Endothelial cell of umbilical vein (primary cell): ENCODE measurements at regions of chr2 and their contacts with region 1.

Region 1: DNA sequence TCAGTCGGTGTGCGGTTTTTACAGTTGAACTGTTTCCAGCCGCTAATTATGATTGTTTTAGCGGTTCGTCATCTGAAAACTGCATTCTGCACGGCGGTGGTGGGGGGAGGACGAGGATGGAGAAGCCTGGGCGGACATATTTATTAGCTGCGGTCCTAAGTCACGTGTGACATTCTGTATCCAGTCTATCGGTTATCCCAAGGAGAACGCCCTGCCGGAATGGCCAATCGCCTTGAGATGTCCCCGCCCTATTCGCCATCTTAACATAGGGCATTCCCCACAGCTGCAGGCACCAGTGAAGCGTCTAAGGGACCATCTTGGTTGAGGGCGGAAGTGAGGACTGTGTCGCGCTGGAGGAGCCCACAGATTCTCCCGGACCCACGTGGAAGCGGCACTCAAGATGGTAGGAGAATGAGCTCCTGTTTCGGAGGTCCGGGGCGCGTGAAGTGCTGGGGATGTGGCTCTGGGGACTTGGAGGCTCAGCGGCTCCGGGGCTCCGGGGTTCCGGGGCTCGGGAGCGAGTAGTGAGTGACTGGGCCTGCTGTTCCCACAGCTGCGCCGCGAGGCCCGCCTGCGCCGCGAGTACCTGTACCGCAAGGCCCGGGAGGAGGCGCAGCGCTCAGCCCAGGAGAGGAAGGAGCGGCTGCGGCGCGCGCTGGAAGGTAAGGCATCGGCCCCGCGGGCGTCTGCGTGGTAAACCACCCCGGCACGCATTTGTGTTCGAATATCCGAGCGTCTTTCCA is at the start of gene IMP4:
- DNase-seq: peak; percentile 99
- H3K4me3 ChIP-seq: peak within 1 kb of the TSS; percentile 52 to 92 (median 83)
- H3K27ac ChIP-seq: peak within 1 kb of the TSS; percentile 81
- H3K4me1 ChIP-seq: peaks cover 8% of the 10 kb centered on the region
- H3K27me3 ChIP-seq: no peaks in the 10 kb centered on the region
- CTCF ChIP-seq: peak; percentile 12 to 47
- POLR2A ChIP-seq: peak; percentile 61
- total RNA-seq, gene IMP4: 63.1 and 74.0 TPM in 2 replicates

Region 2: DNA sequence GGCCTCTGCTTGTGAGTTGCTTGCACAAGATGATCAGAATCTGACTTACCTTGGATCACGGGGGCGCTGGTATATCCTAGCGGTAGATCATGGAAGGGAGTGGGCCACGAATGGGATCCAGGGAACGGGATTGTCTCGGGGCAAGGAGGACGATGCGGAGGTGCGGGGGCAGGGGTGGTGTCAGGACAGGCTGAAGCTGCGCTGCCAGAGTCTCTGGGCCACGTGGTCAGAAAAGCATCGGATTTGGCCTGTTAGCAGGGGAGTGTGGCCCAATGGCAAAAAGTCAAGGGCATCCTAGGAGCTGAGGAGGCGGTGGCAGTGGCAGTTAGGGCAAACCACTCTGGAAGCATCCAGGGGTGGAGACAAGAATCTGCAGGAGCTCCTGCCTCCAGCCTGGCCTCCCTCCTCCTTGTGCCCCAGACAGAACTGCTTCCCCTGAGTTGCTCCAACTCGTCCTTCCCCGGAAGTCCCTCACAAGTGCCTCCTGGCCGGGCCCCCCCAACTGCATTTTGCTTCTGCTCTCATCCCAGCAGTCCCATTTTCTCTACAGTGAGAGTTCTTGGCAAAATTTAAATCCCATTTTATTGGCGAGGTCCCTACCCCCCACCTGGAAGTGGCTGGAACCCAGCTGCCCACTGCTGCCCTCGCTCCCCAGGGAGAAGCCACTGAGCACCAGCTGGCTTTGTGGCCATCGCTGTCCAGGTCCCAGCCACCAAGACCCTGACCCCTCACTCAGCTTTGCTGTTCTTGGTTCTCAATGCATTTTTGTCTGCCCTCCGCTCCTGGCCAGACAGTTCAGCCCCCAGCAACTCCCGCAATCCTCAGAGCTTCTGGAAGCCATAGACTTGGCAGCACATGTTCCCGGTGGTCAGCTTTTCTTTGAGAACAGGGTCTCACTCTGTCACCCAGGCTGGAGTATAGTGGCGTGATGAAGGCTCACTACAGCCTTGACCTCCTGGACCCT is 192.2 kb before region 1 on chr2:
- CTCF ChIA-PET with region 1: no interaction called
- POLR2A ChIA-PET with region 1: no interaction called
- dilution Hi-C with region 1: no loop called
- intact Hi-C with region 1: no loop called
- DNase-seq: no peak
- H3K4me3 ChIP-seq: no peak overlapping the region
- H3K27ac ChIP-seq: no peak overlapping the region
- H3K4me1 ChIP-seq: no peaks in the 10 kb centered on the region
- H3K27me3 ChIP-seq: no peaks in the 10 kb centered on the region
- CTCF ChIP-seq: no peak
- POLR2A ChIP-seq: no peak

Region 3: GRCh38 chr2:130181325-130181879 is 161.3 kb before region 1 on chr2 and contains the start of gene SMPD4:
- CTCF ChIA-PET with region 1: interaction called, 14 read pairs
- POLR2A ChIA-PET with region 1: interaction called, 4 read pairs
- dilution Hi-C with region 1: no loop called
- intact Hi-C with region 1: loop called (anchors 1 kb)
- DNase-seq: peak; percentile 96
- H3K4me3 ChIP-seq: peak within 1 kb of the TSS; percentile 76 to 96 (median 88)
- H3K27ac ChIP-seq: peak within 1 kb of the TSS; percentile 78
- H3K4me1 ChIP-seq: peaks cover 11% of the 10 kb centered on the region
- H3K27me3 ChIP-seq: no peaks in the 10 kb centered on the region
- CTCF ChIP-seq: no peak
- POLR2A ChIP-seq: peak; percentile 53
- total RNA-seq, gene SMPD4: 88.1 and 91.4 TPM in 2 replicates

Region 4: DNA sequence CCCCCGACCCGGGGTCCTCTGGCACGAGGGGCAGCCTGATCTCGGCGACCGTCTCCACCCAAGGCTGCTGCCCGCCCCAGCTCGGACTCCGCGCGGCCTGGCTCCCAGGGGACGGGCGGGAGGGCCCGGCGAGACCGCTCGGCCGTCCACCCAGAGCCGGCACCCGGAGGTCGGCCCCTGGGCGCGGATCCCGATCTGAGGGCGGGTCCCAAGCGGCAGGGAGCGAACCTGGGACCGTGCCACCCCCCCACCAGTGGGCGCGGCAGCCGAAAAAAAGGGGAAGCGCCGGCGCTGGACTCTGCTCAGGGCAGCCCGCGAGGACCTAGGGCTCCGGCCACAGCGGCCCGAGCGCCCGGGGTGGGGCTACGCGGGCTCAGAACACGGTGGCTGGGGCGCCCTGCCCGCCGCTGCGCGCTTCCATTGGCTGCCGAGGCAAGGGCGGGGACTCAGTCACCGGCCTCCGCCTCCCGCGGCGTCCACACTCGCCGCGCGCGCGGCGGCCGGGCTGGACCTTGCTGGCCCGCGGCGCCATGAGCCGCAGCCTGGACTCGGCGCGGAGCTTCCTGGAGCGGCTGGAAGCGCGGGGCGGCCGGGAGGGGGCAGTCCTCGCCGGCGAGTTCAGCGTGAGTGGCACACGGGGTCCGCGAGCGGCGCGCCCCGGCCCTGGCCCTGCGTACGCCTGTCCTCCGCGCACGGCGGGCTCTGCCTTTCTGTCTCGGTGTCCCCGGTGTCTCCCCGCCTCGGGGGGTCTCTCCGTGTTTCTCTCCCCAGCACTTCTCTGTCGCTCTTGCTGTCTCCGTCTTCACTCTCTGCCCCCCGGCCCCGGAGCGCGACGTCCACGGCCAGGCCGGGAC is 13.1 kb after region 1 on chr2 and contains the start of gene PTPN18:
- CTCF ChIA-PET with region 1: interaction called, 37 read pairs
- POLR2A ChIA-PET with region 1: interaction called, 17 read pairs
- dilution Hi-C with region 1: no loop called
- intact Hi-C with region 1: loop called (anchors 1 kb)
- DNase-seq: peak; percentile 89
- H3K4me3 ChIP-seq: peak within 1 kb of the TSS; percentile 46 to 81 (median 53)
- H3K27ac ChIP-seq: no peak within 1 kb of the TSS
- H3K4me1 ChIP-seq: peaks cover 4% of the 10 kb centered on the region
- H3K27me3 ChIP-seq: no peaks in the 10 kb centered on the region
- CTCF ChIP-seq: peak; percentile 64 to 69
- POLR2A ChIP-seq: peak; percentile 75
- total RNA-seq, gene PTPN18: 31.5 and 39.6 TPM in 2 replicates

Region 5: DNA sequence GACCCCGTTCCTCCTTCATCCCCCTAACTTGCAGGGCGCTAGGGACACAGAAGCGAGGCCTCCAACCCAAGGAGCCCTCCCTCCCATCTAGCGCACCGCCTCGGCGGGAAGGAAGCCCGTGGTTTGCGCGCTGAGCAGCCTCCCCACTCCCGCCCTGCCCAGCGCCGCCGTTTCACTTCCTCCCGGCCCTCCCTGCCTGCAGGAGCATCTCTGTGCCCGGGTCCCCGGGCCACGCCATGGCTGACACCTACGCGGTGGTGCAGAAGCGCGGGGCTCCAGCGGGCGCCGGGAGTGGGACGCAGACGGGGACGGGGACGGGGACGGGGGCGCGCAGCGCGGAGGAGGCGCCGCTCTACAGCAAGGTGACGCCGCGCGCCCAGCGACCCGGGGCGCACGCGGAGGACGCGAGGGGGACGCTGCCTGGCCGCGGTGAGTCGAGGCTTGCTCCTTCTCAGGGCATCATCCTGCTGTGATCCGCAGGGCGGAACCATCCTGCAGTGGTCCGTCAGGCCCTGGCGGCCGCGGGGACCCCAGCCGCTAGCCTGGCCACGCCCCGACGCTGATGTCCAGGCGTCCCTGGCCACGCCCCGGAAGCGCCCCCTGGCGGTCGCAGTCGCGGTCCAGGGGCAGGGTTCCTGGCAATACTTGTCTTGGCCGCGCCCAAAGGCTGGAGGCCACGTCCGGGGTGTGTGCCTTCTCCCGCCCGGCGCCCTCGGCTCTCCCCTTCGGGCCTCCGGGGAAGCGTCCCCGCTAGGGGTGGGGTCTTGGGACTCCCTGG is 29.5 kb after region 1 on chr2:
- CTCF ChIA-PET with region 1: interaction called, 11 read pairs
- POLR2A ChIA-PET with region 1: interaction called, 3 read pairs
- dilution Hi-C with region 1: no loop called
- intact Hi-C with region 1: loop called (anchors 1 kb)
- DNase-seq: peak; percentile 54
- H3K4me3 ChIP-seq: peak overlapping the region; percentile 47 to 79 (median 72)
- H3K27ac ChIP-seq: peak overlapping the region; percentile 76
- H3K4me1 ChIP-seq: peaks cover 14% of the 10 kb centered on the region
- H3K27me3 ChIP-seq: no peaks in the 10 kb centered on the region
- CTCF ChIP-seq: peak; percentile 75 to 76
- POLR2A ChIP-seq: peak; percentile 56

Region 6: GRCh38 chr2:131093006-131093695 is 750.4 kb after region 1 on chr2 and contains the start of gene FAM168B:
- CTCF ChIA-PET with region 1: no interaction called
- POLR2A ChIA-PET with region 1: no interaction called
- dilution Hi-C with region 1: no loop called
- intact Hi-C with region 1: loop called (anchors 10 kb)
- DNase-seq: peak; percentile 90
- H3K4me3 ChIP-seq: peak within 1 kb of the TSS; percentile 92 to 100 (median 99)
- H3K27ac ChIP-seq: peak within 1 kb of the TSS; percentile 92
- H3K4me1 ChIP-seq: peaks cover 10% of the 10 kb centered on the region
- H3K27me3 ChIP-seq: no peaks in the 10 kb centered on the region
- CTCF ChIP-seq: no peak
- POLR2A ChIP-seq: peak; percentile 68
- total RNA-seq, gene FAM168B: 107 and 109 TPM in 2 replicates